ENCODE measurements at regions of chr4 and their contacts with region 1.

Region 1: GRCh38 chr4:86593688-86594558 is at the start of gene PTPN13:
- DNase-seq: peak; percentile 99
- H3K4me3 ChIP-seq: peak within 1 kb of the TSS; percentile 87 to 99 (median 96)
- H3K27ac ChIP-seq: peak within 1 kb of the TSS; percentile 76
- H3K4me1 ChIP-seq: peaks cover 3 to 9% (median 5%) of the 10 kb centered on the region in 4 experiments; a peak in 4 of 7 replicates
- H3K27me3 ChIP-seq: no peaks in the 10 kb centered on the region
- CTCF ChIP-seq: peak in 1 of 3 experiments; percentile 7; a peak in 2 of 4 replicates
- EP300 ChIP-seq: no peak
- POLR2A ChIP-seq: peak; percentile 89 to 92
- RAD21 ChIP-seq: peak in 1 of 2 experiments; percentile 11; a peak in 2 of 4 replicates
- total RNA-seq, gene PTPN13: 54.3 and 57.9 TPM in 2 replicates

Region 2: GRCh38 chr4:86330961-86331742 is 262.8 kb before region 1 on chr4:
- CTCF ChIA-PET with region 1: no interaction called
- POLR2A ChIA-PET with region 1: no interaction called
- DNase-seq: no peak
- H3K4me3 ChIP-seq: no peak overlapping the region
- H3K27ac ChIP-seq: no peak overlapping the region
- H3K4me1 ChIP-seq: no peaks in the 10 kb centered on the region
- H3K27me3 ChIP-seq: no peaks in the 10 kb centered on the region
- CTCF ChIP-seq: no peak
- EP300 ChIP-seq: no peak
- POLR2A ChIP-seq: no peak
- RAD21 ChIP-seq: no peak

Region 3: DNA sequence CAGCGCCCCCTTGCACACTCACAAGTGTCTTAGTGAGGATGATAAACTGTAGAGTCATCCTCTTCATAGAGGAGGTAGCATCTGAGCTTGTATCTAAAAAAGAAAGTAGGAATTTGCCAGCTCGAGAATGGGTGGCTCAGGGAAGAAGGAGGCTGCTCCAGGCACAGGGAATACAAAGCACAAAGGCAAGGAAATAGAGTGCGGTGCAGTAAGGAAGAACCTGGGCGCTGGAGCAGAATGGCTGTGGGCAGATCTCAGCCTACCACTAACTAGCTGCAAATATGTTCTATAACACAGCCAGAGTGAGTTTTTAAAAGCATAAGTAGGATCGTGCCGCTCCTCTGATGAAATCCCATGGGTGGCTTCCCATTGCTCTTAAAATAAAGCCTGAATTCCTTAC is 172.5 kb before region 1 on chr4:
- CTCF ChIA-PET with region 1: no interaction called
- POLR2A ChIA-PET with region 1: no interaction called
- DNase-seq: no peak
- H3K4me3 ChIP-seq: no peak overlapping the region
- H3K27ac ChIP-seq: no peak overlapping the region
- H3K4me1 ChIP-seq: peaks cover 0 to 3% (median 0%) of the 10 kb centered on the region in 4 experiments; a peak in 1 of 7 replicates
- H3K27me3 ChIP-seq: peaks cover 0 to 1% (median 0%) of the 10 kb centered on the region in 4 experiments; a peak in 1 of 7 replicates
- CTCF ChIP-seq: no peak
- EP300 ChIP-seq: no peak
- POLR2A ChIP-seq: no peak
- RAD21 ChIP-seq: no peak

Region 4: GRCh38 chr4:86582410-86582809 is 11.5 kb before region 1 on chr4:
- CTCF ChIA-PET with region 1: interaction called, 3 read pairs
- POLR2A ChIA-PET with region 1: interaction called, 11 read pairs
- DNase-seq: no peak
- H3K4me3 ChIP-seq: no peak overlapping the region
- H3K27ac ChIP-seq: no peak overlapping the region
- H3K4me1 ChIP-seq: peaks cover 0 to 2% (median 0%) of the 10 kb centered on the region in 4 experiments; a peak in 1 of 7 replicates
- H3K27me3 ChIP-seq: no peaks in the 10 kb centered on the region
- CTCF ChIP-seq: no peak
- EP300 ChIP-seq: no peak
- POLR2A ChIP-seq: no peak
- RAD21 ChIP-seq: no peak